ENCODE measurements at regions of chr3 and their contacts with region 1.

Region 1: GRCh38 chr3:17195856-17196604 is 311.3 kb downstream of the PLCL2 start:
- DNase-seq: peak; percentile 47
- CTCF ChIP-seq: peak; percentile 29

Region 2: GRCh38 chr3:17151598-17152373 is 44.2 kb before region 1 on chr3:
- CTCF ChIA-PET with region 1: no interaction called
- POLR2A ChIA-PET with region 1: no interaction called
- DNase-seq: peak; percentile 88
- CTCF ChIP-seq: no peak

Region 3: DNA sequence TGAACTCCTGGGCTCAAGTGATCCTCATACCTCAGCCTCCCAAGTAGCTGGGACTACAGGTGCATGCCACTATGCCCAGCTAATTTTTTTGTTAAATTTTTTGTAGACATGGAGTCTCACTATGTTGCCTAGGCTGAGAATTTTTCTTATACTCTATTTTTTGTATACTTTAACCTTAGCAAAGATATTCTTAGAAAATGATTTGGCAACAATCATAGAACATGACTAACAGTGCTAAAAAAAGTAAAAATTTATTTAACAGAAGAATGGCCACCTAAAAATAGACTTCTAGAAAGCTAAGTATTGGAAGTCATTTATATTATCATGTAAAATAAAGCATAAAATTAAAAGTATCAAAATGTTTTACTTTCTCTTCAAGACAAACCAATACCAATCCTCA is 11.0 kb after region 1 on chr3:
- CTCF ChIA-PET with region 1: interaction called, 16 read pairs
- POLR2A ChIA-PET with region 1: no interaction called
- DNase-seq: no peak
- CTCF ChIP-seq: no peak

Region 4: GRCh38 chr3:17213102-17213501 is 17.1 kb after region 1 on chr3:
- CTCF ChIA-PET with region 1: interaction called, 16 read pairs
- POLR2A ChIA-PET with region 1: no interaction called
- DNase-seq: no peak
- CTCF ChIP-seq: no peak

Region 5: DNA sequence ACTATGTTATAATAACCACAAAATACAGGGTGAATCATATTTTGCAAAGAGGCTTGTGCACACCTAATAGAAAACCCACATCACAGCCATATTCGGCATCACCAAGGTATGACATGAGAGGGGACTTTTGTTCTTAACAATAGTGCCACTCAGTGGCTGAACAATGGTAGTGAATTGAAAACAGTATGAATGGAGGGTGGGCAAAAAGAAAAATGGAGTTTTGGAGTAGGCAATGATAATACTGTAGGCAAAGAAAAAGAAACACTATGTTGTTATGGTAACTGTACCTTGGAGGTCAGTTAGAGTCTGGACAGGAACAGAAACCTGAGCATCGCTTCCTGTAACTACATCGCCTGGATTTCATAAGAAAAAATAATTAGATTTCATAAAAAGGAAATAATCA is 37.4 kb after region 1 on chr3:
- CTCF ChIA-PET with region 1: interaction called, 10 read pairs
- POLR2A ChIA-PET with region 1: no interaction called
- DNase-seq: peak; percentile 28
- CTCF ChIP-seq: peak; percentile 60

Region 6: GRCh38 chr3:17262990-17263389 is 67.0 kb after region 1 on chr3:
- CTCF ChIA-PET with region 1: no interaction called
- POLR2A ChIA-PET with region 1: no interaction called
- DNase-seq: no peak
- CTCF ChIP-seq: no peak

Region 7: GRCh38 chr3:17456046-17456445 is 260.0 kb after region 1 on chr3:
- CTCF ChIA-PET with region 1: no interaction called
- POLR2A ChIA-PET with region 1: no interaction called
- DNase-seq: no peak
- CTCF ChIP-seq: no peak